Adrenal gland (tissue), 19 donors: ENCODE measurements at regions of chr20 and their contacts with region 1.

Region 1: GRCh38 chr20:50575847-50576720 is 65.9 kb downstream of the PTPN1 start:
- DNase-seq: peak; percentile 75 to 90 (median 85)
- H3K4me3 ChIP-seq: no peak overlapping the region
- H3K27ac ChIP-seq: peak overlapping the region in 3 of 5 donors; percentile 11 to 48 (median 32)
- H3K4me1 ChIP-seq: peaks cover 22% of the 10 kb centered on the region in 2 donors
- H3K27me3 ChIP-seq: no peaks in the 10 kb centered on the region
- CTCF ChIP-seq: peak; percentile 58 to 83 (median 74)
- POLR2A ChIP-seq: no peak

Region 2: DNA sequence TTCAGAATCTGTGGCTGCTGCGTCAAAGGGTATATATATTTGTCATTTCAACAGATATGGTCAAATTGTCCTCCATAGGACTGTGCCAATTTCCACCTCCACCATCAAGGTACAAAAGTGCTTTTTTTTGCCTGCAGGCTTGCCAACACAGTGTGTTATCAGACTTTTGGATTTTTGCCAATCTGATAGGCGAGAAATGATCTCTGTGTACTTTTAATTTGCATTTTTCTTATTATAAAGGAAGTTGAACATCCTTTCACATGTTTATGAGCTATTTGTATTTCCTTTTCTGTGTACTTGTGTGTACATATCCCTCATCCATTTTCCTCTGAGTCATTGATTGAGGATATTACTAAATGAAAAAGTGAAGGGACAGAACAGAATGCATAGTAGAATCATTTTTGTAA is 104.9 kb before region 1 on chr20:
- intact Hi-C with region 1: loop called in 1 of 2 experiments (anchors 5 kb)
- DNase-seq: no peak
- H3K4me3 ChIP-seq: no peak overlapping the region
- H3K27ac ChIP-seq: peak overlapping the region in 2 of 5 donors; percentile 37 to 74
- H3K4me1 ChIP-seq: peaks cover 18 to 47% of the 10 kb centered on the region in 2 donors
- H3K27me3 ChIP-seq: no peaks in the 10 kb centered on the region
- CTCF ChIP-seq: no peak
- POLR2A ChIP-seq: no peak

Region 3: GRCh38 chr20:50491926-50492634 is 84.0 kb before region 1 on chr20:
- intact Hi-C with region 1: no loop called
- DNase-seq: peak in 6 of 7 donors; percentile 65 to 84 (median 74)
- H3K4me3 ChIP-seq: no peak overlapping the region
- H3K27ac ChIP-seq: no peak overlapping the region
- H3K4me1 ChIP-seq: no peaks in the 10 kb centered on the region
- H3K27me3 ChIP-seq: no peaks in the 10 kb centered on the region
- CTCF ChIP-seq: no peak
- POLR2A ChIP-seq: no peak

Region 4: GRCh38 chr20:50504231-50504823 is 71.8 kb before region 1 on chr20:
- intact Hi-C with region 1: loop called in 1 of 2 experiments (anchors 5 kb)
- DNase-seq: peak in 2 of 7 donors; percentile 22 to 25
- H3K4me3 ChIP-seq: no peak overlapping the region
- H3K27ac ChIP-seq: peak overlapping the region in 4 of 5 donors; percentile 15 to 87 (median 54)
- H3K4me1 ChIP-seq: peaks cover 8 to 18% of the 10 kb centered on the region in 2 donors
- H3K27me3 ChIP-seq: no peaks in the 10 kb centered on the region
- CTCF ChIP-seq: peak in 4 of 6 experiments; percentile 2 to 32 (median 21)
- POLR2A ChIP-seq: no peak